BJ (cell line): ENCODE measurements at regions of chr18 and their contacts with region 1.

Region 1: DNA sequence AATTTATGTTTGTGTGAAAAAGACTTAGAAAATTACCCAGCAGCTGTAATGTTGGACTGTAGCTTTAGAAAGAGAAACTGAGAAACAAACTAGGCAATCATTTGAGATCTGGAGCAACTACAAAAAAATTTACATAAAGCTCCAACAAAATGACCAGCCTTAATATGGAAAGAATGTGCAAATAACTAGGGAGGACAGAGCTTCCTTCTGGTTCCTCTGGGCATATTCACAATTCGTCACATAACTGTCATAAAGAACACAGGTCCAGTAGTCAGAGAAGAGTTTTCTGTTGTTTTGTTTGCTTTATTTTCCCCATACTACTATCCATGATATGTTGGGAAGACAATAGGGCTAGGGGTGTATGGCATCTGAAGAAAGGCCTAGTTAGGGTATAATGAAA is 416.8 kb upstream of the DSEL start:
- DNase-seq: no peak
- H3K4me3 ChIP-seq: no peak overlapping the region
- H3K27me3 ChIP-seq: no peaks in the 10 kb centered on the region
- CTCF ChIP-seq: no peak

Region 2: DNA sequence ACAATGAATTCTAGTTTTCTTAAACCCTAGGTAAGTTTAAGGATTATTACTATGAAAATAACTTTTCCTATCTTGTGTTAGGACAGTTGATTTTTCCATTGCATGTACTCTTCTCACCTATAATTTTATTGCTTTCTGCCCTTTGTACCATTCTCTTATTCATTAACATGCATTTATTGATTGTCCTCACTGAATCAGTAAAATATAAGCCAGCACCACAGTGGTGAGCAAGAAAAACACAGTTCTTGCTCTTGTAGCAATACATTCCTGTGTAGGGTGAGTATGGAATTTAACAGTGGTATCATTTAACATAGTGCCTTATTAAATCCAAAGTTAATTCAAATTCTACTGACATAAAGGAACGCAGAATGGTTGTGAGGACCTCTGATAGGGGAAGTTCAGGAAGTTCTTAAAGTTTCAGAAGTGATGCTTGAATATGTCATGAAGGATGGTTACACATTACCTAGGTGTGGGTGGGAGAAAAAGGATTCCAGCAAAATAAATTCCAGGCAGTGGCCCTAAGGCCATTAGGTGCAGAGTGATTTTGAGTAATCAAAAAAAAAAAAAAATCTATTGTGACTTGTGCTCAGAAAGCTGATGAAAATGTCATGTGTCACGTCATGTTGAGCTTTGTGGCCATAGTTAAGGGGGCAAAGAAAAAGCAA is 312.1 kb before region 1 on chr18:
- CTCF ChIA-PET with region 1: no interaction called
- POLR2A ChIA-PET with region 1: interaction called, 11 read pairs
- DNase-seq: no peak
- H3K4me3 ChIP-seq: no peak overlapping the region
- H3K27me3 ChIP-seq: no peaks in the 10 kb centered on the region
- CTCF ChIP-seq: no peak